ENCODE measurements at regions of chr10 and their contacts with region 1.

Region 1: GRCh38 chr10:47311932-47312662 is 10.2 kb upstream of the GDF2 start:
- H3K4me3 Mint-ChIP-seq: no peak overlapping the region
- H3K27ac Mint-ChIP-seq: no peak overlapping the region
- H3K4me1 Mint-ChIP-seq: no peaks in the 10 kb centered on the region
- H3K27me3 Mint-ChIP-seq: peaks cover 23% of the 10 kb centered on the region

Region 2: GRCh38 chr10:47037654-47038425 is 274.3 kb before region 1 on chr10:
- intact Hi-C with region 1: no loop called
- H3K4me3 Mint-ChIP-seq: no peak overlapping the region
- H3K27ac Mint-ChIP-seq: no peak overlapping the region
- H3K4me1 Mint-ChIP-seq: no peaks in the 10 kb centered on the region
- H3K27me3 Mint-ChIP-seq: peaks cover 3% of the 10 kb centered on the region

Region 3: GRCh38 chr10:47047671-47048525 is 264.2 kb before region 1 on chr10:
- intact Hi-C with region 1: loop called (anchors 1 kb)
- H3K4me3 Mint-ChIP-seq: no peak overlapping the region
- H3K27ac Mint-ChIP-seq: no peak overlapping the region
- H3K4me1 Mint-ChIP-seq: peaks cover 10% of the 10 kb centered on the region
- H3K27me3 Mint-ChIP-seq: no peaks in the 10 kb centered on the region

Measured in dendritic cell treated with granulocyte-macrophage colony-stimulating factor and Interleukin-4, amounts not matched to agents 40 ng/mL and 50 ng/mL, for 4 days (primary cell).